Dorsolateral prefrontal cortex (tissue), 120 donors: ENCODE measurements at regions of chr9 and their contacts with region 1.

Region 1: DNA sequence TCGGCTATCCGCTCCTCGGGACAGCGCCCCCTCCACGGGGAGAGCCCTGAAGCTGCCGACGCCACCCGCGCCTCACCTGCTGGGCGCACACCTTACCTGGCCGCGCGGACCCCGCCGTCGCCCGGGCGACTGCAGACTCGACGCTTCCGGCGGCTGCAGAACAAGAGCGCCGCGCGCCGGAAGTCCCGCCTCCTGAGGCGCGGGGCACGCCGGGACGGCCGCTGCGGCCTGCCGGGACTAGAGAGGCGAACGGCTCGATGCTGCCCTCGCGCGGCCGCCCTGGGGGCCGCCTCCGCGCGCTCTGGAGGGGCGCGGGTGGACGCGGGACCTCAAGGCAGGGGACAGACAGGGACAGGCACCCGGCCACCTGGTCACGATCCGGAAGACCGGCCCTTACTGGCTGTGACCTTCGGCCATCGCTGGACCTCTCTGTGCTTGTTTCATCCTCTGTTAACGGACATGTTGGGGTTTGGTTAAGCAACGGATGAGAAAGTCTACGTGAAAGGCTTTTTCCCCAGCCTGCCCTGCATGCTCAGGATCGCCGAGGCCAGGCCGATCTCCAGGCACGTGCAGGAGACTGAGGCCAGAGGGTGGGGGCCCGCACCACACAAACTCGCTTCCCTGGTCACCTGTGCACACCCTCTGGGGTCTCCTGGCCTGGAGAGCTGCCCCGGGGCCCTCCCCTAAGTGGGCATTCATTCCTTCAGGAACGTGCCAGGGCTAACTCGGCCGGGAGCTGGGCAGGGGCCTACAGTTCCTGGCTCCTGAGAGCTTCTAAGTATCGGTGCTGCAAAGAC is at the start of gene SNAPC4:
- DNase-seq: peak; percentile 65 to 89 (median 79)
- H3K4me3 ChIP-seq: peak within 1 kb of the TSS; percentile 68 to 99 (median 91)
- H3K27ac ChIP-seq: peak within 1 kb of the TSS in 46 of 59 donors; percentile 6 to 88 (median 58)
- H3K27me3 ChIP-seq: no peaks in the 10 kb centered on the region
- CTCF ChIP-seq: peak; percentile 74 to 100 (median 98)
- total RNA-seq, gene SNAPC4: 9.8 to 23.9 (median 14.4) TPM

Region 2: DNA sequence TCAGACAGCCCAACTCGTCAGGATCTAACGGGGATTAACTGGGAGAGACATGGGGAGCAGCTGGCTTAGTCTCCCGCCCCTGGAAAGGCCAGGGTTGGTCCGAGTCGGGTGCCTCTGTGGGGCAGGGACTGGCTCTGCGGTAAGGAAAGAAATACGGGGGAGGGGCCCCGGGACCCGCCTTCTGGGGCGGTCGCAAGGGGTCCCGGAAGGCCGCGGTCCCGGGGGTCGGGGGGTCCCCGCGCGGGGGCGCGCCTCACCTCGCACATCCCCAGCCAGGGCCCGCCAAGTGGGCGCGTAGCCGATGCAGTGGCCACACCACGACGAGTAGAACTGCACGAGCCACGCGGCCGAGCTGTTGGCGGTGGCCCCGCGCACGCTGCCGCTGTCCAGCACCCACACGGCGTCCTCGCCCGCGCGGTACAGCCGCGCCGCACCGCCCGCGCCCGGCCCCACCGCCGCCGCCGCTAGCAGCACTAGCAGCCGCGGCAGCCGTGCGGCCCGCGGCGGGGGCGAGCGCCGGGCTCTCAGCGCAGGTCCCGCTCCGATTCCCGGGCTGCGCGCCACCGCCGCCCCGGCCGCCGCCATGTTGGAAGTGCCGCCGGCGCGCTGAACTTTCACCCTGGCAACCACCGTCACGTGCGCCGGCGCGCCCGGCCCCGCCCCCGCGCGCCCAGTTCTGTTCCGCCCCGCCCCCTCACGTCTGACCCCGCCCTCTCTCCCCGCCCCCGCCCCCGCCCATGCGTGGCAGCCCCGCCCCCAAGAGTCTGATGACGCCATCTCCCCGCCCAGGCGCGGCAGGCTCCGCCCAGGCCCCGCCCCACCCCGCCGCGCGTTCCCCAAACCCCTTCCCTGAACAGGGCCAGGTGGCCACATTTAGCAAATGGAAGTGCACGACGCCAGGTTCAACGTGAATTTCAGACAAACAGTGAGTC is 154.8 kb before region 1 on chr9 and contains the start of gene QSOX2:
- intact Hi-C with region 1: loop called in 1 of 2 experiments (anchors 10 kb)
- DNase-seq: peak; percentile 70 to 89 (median 82)
- H3K4me3 ChIP-seq: peak within 1 kb of the TSS; percentile 50 to 89 (median 77)
- H3K27ac ChIP-seq: peak within 1 kb of the TSS in 30 of 59 donors; percentile 8 to 71 (median 52)
- H3K27me3 ChIP-seq: no peaks in the 10 kb centered on the region
- CTCF ChIP-seq: peak in 4 of 56 donors; percentile 12 to 21 (median 18)
- total RNA-seq, gene QSOX2: 9.6 to 20.4 (median 14.1) TPM

Region 3: DNA sequence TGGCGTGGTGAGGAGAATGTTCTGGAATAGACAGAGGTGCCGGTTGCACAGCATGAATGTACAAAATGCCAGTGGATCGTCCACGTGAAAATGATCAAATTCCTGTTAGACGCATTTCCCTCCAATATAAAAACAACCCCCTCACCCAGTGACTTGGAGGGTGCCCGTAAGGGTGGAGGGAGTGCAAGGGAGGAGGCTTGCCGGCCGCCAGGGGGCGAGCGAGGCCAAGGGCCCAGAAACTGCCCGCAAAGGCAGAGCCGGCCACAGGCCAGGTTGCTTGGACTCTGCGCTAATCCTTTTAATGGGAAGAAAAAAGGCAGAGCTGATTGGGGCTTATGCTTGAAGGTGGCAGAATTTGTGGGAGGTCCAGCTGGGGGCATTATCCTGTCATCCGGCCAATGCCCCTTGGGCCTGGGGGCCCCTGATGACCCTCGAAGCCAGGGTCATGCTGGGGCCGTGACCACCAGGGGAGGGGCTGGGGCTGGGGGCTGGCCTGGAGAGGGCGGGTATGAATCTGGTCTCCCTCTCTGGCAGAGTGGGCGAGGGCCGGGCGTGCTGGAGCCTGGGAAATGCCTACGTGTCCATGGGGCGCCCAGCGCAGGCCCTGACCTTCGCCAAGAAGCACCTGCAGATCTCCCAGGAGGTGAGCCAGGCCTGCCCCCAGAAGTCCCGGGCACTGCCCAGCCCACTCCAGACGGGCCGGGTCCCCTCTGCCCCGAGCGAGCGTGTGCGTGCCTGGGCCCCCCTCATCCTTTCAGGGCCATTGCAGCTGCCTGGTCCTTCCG is 60.9 kb before region 1 on chr9:
- intact Hi-C with region 1: loop called in 1 of 2 experiments (anchors 2 kb)
- DNase-seq: peak in 6 of 10 donors; percentile 52 to 81 (median 69)
- H3K4me3 ChIP-seq: no peak overlapping the region
- H3K27ac ChIP-seq: peak overlapping the region in 18 of 59 donors; percentile 2 to 76 (median 42)
- H3K27me3 ChIP-seq: no peaks in the 10 kb centered on the region
- CTCF ChIP-seq: peak; percentile 21 to 92 (median 79)

Region 4: GRCh38 chr9:136363606-136364370 is 36.4 kb before region 1 on chr9 and contains the start of gene DNLZ:
- intact Hi-C with region 1: loop called (anchors 1 to 2 kb)
- DNase-seq: peak in 8 of 10 donors; percentile 61 to 86 (median 72)
- H3K4me3 ChIP-seq: peak within 1 kb of the TSS; percentile 47 to 97 (median 77)
- H3K27ac ChIP-seq: peak within 1 kb of the TSS in 55 of 59 donors; percentile 23 to 95 (median 84)
- H3K27me3 ChIP-seq: no peaks in the 10 kb centered on the region
- CTCF ChIP-seq: peak; percentile 84 to 100 (median 96)
- total RNA-seq, gene DNLZ: 10.7 to 49.9 (median 18.5) TPM

Region 5: DNA sequence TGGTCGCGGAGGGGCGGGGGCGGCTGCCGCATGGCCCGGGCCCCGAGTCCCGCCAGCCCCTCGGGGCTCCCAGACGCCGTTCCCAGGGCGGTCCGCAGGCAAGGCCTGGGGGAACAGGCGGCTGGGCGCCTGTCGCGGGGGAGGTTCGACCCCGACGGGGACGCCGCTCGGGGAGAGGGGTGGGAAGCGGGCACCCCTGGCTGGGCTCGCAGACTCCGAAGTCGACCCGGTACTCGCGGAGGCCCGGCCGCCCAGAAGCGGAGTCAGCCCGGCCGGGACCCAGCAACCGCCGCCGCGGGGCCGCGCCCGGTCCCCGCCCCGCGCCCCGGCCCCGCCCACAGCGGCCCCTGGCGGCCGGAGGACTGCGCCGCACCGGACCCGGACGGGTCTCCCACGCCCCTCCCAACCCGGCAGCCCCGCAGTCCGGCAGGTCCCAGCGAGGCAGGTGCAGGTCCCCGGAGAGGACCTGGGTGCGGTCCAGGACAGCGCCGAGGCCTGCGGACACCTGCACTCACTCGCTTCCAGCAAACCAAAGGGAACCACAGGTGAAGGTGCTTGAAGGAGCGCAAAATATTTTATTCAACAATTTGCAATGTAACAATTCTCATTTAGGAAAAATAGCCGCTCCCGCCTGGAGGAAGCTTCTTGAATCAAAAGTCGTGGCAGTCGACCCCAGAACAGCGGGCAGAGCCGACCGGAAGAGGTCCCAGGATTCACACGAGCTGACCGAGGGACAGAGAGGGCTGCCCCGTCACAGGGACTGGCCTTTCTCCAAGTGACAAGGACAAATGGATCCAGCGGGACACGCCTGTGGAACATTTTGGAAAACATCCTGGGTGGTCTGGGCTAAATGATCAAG is 39.5 kb after region 1 on chr9 and contains the start of gene INPP5E:
- intact Hi-C with region 1: loop called in 1 of 2 experiments (anchors 5 kb)
- DNase-seq: peak in 7 of 10 donors; percentile 22 to 87 (median 67)
- H3K4me3 ChIP-seq: peak within 1 kb of the TSS; percentile 66 to 95 (median 82)
- H3K27ac ChIP-seq: peak within 1 kb of the TSS in 47 of 59 donors; percentile 31 to 89 (median 65)
- H3K27me3 ChIP-seq: no peaks in the 10 kb centered on the region
- CTCF ChIP-seq: peak in 54 of 56 donors; percentile 25 to 93 (median 60)
- total RNA-seq, gene INPP5E: 16.7 to 35.7 (median 23.5) TPM